ENCODE measurements at regions of chr9 and their contacts with region 1.

Region 1: DNA sequence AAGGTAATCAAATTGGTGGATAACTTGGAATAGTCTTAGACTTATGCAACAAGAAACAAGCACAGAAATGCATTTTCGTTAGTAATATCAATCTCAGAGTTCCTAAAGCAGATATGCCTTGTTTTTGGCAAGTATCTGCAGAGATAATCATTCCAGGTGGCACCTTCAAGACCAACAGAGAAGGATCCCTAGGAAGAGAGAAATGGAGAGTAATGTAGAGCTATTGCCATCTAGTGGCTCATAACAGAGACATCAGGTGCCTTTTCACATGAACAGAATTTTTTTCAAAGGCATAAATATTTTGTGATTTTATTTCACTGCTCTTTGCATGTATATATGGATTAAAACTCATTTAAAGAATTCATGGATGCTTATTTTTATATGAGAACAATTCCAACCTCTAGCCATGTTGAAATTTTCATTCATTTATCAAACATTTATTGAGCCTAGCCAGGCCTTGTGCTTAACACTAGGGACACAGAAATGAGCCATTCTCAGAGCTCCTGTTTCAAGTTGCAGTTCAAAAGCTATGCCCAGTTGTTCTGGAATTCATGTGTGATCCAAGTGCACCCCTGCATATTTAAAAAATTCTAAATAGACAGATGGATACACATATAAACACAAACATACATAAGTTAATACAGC is 117.5 kb upstream of the OR13F1 start:
- DNase-seq: no peak
- ATAC-seq: no peak
- H3K4me3 Mint-ChIP-seq: no peak overlapping the region
- H3K27ac Mint-ChIP-seq: no peak overlapping the region
- H3K4me1 Mint-ChIP-seq: no peaks in the 10 kb centered on the region
- H3K27me3 Mint-ChIP-seq: peaks cover 4% of the 10 kb centered on the region

Region 2: GRCh38 chr9:103397868-103398600 is 988.5 kb before region 1 on chr9:
- CTCF ChIA-PET with region 1: no interaction called
- POLR2A ChIA-PET with region 1: no interaction called
- intact Hi-C with region 1: loop called (anchors 5 kb)
- DNase-seq: peak; percentile 48
- ATAC-seq: peak; percentile 69
- H3K4me3 Mint-ChIP-seq: no peak overlapping the region
- H3K27ac Mint-ChIP-seq: no peak overlapping the region
- H3K4me1 Mint-ChIP-seq: no peaks in the 10 kb centered on the region
- H3K27me3 Mint-ChIP-seq: no peaks in the 10 kb centered on the region

Region 3: DNA sequence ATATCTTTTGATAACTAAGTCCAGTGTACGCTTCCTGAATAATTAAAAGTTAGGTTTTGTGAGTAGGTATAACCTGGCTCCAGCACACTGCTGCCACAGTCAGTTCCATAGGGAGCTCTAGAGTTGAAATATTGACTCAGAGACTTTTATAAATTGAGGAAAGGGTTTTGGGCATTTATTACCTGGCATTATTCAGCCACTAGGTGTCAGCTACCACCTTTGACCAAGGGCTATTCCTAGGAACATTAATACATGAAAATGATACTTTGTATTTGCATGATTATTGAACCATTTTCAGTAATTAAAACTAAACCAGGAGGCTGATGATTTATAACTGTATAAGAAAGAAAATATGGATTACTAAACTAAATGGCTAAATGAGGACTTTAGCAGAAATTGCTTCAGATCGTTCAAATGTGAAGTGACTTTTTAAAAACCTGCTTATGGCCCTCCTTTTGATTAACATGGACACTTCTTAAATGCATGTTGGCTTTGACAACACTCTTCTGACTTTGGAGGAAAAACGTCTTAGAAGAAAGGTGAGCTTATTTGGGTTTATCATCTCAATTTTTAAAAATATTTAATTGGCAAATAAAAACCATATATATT is 209.4 kb before region 1 on chr9:
- CTCF ChIA-PET with region 1: no interaction called
- POLR2A ChIA-PET with region 1: no interaction called
- intact Hi-C with region 1: loop called in 1 of 2 experiments (anchors 10 kb)
- DNase-seq: no peak
- ATAC-seq: no peak
- H3K4me3 Mint-ChIP-seq: no peak overlapping the region
- H3K27ac Mint-ChIP-seq: no peak overlapping the region
- H3K4me1 Mint-ChIP-seq: no peaks in the 10 kb centered on the region
- H3K27me3 Mint-ChIP-seq: peaks cover 2% of the 10 kb centered on the region

Region 4: GRCh38 chr9:104682642-104683041 is 296.1 kb after region 1 on chr9:
- CTCF ChIA-PET with region 1: no interaction called
- POLR2A ChIA-PET with region 1: no interaction called
- intact Hi-C with region 1: loop called in 1 of 2 experiments (anchors 5 kb)
- DNase-seq: no peak
- ATAC-seq: peak; percentile 53
- H3K4me3 Mint-ChIP-seq: no peak overlapping the region
- H3K27ac Mint-ChIP-seq: no peak overlapping the region
- H3K4me1 Mint-ChIP-seq: no peaks in the 10 kb centered on the region
- H3K27me3 Mint-ChIP-seq: no peaks in the 10 kb centered on the region

Region 5: DNA sequence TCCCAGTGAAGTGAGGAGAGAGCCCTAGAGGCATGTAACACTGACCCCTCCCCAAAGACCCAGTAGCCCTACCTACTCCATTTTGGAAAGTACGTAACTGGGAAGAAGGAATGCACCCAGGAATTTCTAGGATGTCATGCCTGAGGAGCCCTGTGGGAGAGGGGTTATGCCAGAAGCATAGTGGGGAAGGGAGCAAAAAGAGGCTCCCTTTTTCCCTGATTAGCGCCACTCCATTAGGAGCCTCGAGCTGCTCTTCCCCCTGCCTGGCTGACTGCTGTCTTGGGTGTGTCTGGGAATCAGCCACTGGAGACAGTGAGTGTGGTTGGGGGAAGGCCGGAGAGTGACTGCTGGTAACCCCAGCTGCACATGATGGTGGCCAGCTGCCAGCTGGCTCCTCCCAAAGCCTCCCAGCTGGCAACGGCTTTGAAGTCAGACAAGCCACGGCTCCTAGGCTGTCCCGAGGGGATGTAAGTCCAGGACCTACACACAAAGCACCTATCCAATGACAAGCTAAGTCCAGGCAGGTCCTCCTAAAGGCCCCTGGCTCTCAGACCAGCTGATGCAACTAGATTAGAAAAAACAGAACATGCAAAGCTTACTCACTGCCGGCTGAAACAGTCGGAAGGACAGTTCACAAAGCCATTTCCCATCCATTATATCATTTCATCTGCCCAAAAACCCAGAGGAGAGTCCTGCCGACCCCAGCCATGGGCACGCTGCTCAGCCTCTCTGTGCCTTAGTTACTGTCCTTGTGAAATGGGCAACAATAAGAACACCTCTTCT is 678.0 kb after region 1 on chr9:
- CTCF ChIA-PET with region 1: no interaction called
- POLR2A ChIA-PET with region 1: no interaction called
- intact Hi-C with region 1: no loop called
- DNase-seq: peak; percentile 10
- ATAC-seq: no peak
- H3K4me3 Mint-ChIP-seq: no peak overlapping the region
- H3K27ac Mint-ChIP-seq: peak overlapping the region; percentile 16
- H3K4me1 Mint-ChIP-seq: peaks cover 17% of the 10 kb centered on the region
- H3K27me3 Mint-ChIP-seq: no peaks in the 10 kb centered on the region

Measured in activated CD4-positive, alpha-beta T cell treated with anti-CD3 and anti-CD28 coated beads for 36 hours (primary cell).